ENCODE measurements at regions of chr16 and their contacts with region 1.

Region 1: DNA sequence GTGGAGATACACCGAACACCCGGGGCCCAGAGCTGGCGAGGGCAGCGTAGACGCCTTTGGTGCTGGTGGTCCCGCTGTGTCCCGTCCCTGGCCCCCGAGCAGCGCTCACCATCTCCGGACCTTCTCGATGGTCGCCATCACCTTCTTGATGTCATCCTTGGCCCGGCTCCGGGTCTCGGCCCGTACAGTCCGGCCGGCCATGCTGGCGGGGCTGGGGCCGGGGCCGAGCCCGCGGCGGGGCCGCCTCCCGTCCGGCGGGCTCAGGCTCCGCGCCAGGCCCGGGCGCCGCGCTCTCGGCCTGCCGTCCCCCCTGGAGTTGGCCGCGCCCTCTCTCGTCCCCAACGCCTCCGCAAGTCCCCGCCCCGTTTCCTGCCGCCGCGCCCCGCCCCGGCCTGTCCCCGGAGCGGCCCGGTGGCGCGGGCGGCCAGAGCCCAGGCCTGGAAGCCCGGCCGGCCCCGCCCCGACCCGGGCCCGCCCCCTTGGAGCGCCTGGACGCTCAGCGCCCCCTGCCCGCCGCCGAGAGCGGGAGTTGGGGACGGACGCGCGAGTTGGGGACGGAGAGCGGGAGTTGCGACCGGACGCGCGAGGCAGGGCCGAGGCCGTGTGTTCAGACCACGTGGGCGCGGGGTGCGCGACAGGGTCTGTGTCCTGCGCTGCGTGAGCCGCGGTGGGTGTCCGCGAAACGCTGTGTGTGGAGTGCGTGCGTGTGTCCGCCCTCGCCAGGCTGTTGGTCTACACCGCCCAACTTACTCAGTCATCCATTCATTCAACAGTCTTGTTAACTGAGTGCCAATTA is at the start of gene BCL7C:
- DNase-seq: peak; percentile 91
- H3K4me3 ChIP-seq: peak within 1 kb of the TSS; percentile 79
- H3K27ac ChIP-seq: peak within 1 kb of the TSS; percentile 84
- H3K4me1 ChIP-seq: peaks cover 16% of the 10 kb centered on the region
- H3K27me3 ChIP-seq: no peaks in the 10 kb centered on the region
- CTCF ChIP-seq: peak; percentile 46
- total RNA-seq, gene BCL7C: 28.2 and 34.7 TPM in 2 replicates

Region 2: GRCh38 chr16:30820952-30821760 is 72.8 kb before region 1 on chr16:
- CTCF ChIA-PET with region 1: interaction called, 13 read pairs
- POLR2A ChIA-PET with region 1: no interaction called
- intact Hi-C with region 1: no loop called
- DNase-seq: no peak
- H3K4me3 ChIP-seq: no peak overlapping the region
- H3K27ac ChIP-seq: no peak overlapping the region
- H3K4me1 ChIP-seq: no peaks in the 10 kb centered on the region
- H3K27me3 ChIP-seq: no peaks in the 10 kb centered on the region
- CTCF ChIP-seq: no peak

Measured in A673 (cell line).